Heart right ventricle (tissue), 16 donors: ENCODE measurements at regions of chr5 and their contacts with region 1.

Region 1: GRCh38 chr5:38660194-38660668 is 103.8 kb upstream of the LIFR start:
- DNase-seq: peak; percentile 18
- ATAC-seq: peak; percentile 60 to 94 (median 88)
- H3K4me3 ChIP-seq: peak overlapping the region in 4 of 10 donors; percentile 26 to 31 (median 29)
- H3K27ac ChIP-seq: peak overlapping the region in 6 of 10 donors; percentile 21 to 70 (median 56)
- H3K4me1 ChIP-seq: peaks cover 0 to 36% (median 21%) of the 10 kb centered on the region in 9 donors
- H3K27me3 ChIP-seq: no peaks in the 10 kb centered on the region
- CTCF ChIP-seq: no peak

Region 2: GRCh38 chr5:38193015-38193581 is 467.1 kb before region 1 on chr5:
- intact Hi-C with region 1: no loop called
- DNase-seq: peak; percentile 56 to 66
- ATAC-seq: peak; percentile 67 to 89 (median 76)
- H3K4me3 ChIP-seq: no peak overlapping the region
- H3K27ac ChIP-seq: no peak overlapping the region
- H3K4me1 ChIP-seq: no peaks in the 10 kb centered on the region
- H3K27me3 ChIP-seq: peaks cover 0 to 29% (median 21%) of the 10 kb centered on the region in 7 donors
- CTCF ChIP-seq: peak; percentile 68 to 88 (median 86)

Region 3: GRCh38 chr5:38551030-38552017 is 108.9 kb before region 1 on chr5:
- intact Hi-C with region 1: loop called in 6 of 10 experiments (anchors 2 to 5 kb)
- DNase-seq: no peak
- ATAC-seq: peak in 5 of 8 donors; percentile 44 to 62 (median 52)
- H3K4me3 ChIP-seq: no peak overlapping the region
- H3K27ac ChIP-seq: peak overlapping the region in 5 of 10 donors; percentile 2 to 45 (median 33)
- H3K4me1 ChIP-seq: peaks cover 0 to 84% (median 53%) of the 10 kb centered on the region in 9 donors
- H3K27me3 ChIP-seq: peaks cover 0 to 39% (median 0%) of the 10 kb centered on the region in 7 donors
- CTCF ChIP-seq: peak; percentile 17 to 71 (median 58)

Region 4: DNA sequence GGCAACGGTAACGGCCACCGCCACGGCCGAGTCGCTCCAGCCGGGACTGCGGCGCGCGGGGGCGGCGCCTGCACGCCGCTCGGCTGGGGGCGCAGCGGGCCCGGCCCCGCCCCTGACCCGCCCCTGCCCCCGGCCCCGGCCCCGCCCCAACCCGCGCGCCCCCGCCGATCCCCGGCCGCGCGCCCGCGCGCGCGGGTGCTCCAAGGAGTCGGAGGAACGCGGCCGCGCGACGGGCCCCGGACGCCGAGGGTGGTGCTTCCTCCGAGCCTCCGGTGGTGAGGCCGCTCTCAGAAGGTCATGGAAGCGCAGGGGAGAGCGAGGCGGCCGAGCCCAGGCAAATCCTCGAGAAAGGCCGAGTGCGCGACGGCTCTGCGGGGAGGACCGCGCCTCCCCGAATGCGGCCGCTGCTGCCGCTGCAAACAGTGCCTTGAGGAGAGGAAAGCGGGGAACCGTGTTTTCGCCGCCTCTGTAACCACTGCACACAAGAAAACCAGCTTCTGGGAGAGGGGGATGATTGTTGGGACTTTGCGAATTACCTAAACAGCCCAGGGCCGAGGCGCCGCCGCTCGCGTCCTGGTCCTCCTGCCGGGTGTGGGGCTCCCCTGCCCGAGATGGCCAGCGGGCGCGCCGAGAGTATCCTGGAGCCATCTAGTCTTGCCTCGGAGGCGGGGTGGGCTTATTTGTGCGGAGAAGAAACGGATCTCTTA is 103.5 kb before region 1 on chr5 and contains the start of gene LIFR:
- intact Hi-C with region 1: loop called in 6 of 10 experiments (anchors 2 to 5 kb)
- DNase-seq: peak; percentile 84 to 88
- ATAC-seq: peak; percentile 90 to 93 (median 92)
- H3K4me3 ChIP-seq: peak within 1 kb of the TSS; percentile 67 to 97 (median 83)
- H3K27ac ChIP-seq: peak within 1 kb of the TSS; percentile 93 to 100 (median 98)
- H3K4me1 ChIP-seq: peaks cover 0 to 64% (median 32%) of the 10 kb centered on the region in 9 donors
- H3K27me3 ChIP-seq: peaks cover 0 to 64% (median 0%) of the 10 kb centered on the region in 7 donors
- CTCF ChIP-seq: peak in 1 of 9 donors; percentile 4
- total RNA-seq, gene LIFR: 34.7 to 58.8 (median 46.0) TPM

Region 5: DNA sequence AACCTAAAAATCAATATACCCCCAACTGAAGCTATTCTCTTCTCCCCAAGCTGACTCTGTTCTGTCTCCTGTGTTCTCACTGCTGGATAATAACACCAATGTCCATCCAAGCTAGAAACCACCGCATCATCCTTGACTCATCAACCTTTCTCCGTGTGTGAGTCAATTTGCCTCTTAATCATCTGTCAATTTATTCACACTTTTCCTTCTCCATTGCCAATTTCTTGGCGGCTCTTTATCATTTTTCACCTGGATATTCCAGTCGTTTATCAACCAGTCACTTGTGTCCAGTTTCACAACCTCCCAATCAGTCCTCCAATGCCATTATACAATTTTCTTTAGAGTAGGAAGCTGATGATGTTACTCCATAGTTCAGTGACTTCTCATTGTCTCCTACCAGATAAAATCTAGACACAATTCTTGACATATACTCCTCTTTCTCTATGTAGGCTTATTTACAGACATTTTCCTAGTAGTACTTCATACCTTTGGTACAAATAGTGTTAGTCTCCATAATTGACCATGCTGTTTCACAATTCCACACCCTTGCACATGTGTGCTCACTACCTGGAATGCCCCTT is 58.3 kb before region 1 on chr5:
- intact Hi-C with region 1: loop called in 1 of 10 experiments (anchors 5 kb)
- DNase-seq: no peak
- ATAC-seq: peak in 1 of 8 donors; percentile 43
- H3K4me3 ChIP-seq: no peak overlapping the region
- H3K27ac ChIP-seq: peak overlapping the region; percentile 14 to 76 (median 52)
- H3K4me1 ChIP-seq: peaks cover 17 to 58% (median 42%) of the 10 kb centered on the region in 9 donors
- H3K27me3 ChIP-seq: no peaks in the 10 kb centered on the region
- CTCF ChIP-seq: no peak